ENCODE measurements at regions of chr2 and their contacts with region 1.

Region 1: DNA sequence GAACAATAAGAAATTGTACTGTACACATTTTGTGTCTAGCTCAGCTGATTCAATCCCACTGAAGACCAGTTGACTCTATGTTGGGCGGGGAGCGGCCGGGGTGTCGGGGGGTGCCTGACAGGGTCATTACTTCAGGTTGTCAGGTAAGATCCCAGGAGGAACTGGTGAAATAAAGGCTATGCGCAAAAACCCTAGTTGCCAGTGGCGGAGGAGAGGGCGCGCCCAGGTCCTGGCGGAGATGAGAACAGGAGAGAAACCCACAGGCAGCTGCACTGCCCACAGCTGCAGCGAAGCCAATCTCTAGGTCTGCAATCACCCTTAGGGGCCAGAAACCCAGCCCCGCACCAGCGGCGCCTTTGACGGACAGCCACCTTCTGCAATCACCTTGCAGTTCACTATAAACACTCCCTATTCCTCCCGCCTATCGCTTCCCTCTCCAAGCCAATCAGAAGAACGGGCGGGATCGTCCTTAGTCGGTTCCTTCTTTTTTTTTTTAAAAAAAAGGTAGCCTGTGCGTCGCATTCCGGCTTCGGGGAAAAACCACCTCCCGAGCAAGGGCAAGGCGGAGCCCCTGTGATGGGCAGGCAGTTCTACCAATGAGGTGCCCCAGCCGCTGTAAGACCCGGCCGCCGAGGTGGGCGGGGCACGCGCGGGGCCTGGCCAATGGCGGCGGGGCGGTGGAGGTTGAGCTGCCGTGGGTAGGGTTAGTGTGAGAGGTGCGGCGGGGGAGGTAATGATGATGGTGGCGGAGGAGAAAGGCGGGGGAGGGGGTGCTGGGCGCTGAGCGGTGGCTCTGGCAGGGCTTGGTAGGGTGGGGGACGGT is at the start of gene EHBP1:
- DNase-seq: peak; percentile 95 to 99 (median 98)
- ATAC-seq: peak; percentile 98
- H3K4me3 ChIP-seq: peak within 1 kb of the TSS; percentile 82
- H3K4me3 Mint-ChIP-seq: peak within 1 kb of the TSS; percentile 83 to 98 (median 92)
- H3K27ac ChIP-seq: peak within 1 kb of the TSS; percentile 72
- H3K27ac Mint-ChIP-seq: peak within 1 kb of the TSS; percentile 76 to 93 (median 84)
- H3K4me1 ChIP-seq: peaks cover 0 to 25% of the 10 kb centered on the region in 2 donors
- H3K4me1 Mint-ChIP-seq: peaks cover 24 to 48% (median 31%) of the 10 kb centered on the region in 7 donors
- H3K27me3 ChIP-seq: no peaks in the 10 kb centered on the region
- H3K27me3 Mint-ChIP-seq: peaks cover 0 to 13% (median 0%) of the 10 kb centered on the region in 5 donors
- total RNA-seq, gene EHBP1: 23.8 to 31.5 (median 30.0) TPM

Region 2: DNA sequence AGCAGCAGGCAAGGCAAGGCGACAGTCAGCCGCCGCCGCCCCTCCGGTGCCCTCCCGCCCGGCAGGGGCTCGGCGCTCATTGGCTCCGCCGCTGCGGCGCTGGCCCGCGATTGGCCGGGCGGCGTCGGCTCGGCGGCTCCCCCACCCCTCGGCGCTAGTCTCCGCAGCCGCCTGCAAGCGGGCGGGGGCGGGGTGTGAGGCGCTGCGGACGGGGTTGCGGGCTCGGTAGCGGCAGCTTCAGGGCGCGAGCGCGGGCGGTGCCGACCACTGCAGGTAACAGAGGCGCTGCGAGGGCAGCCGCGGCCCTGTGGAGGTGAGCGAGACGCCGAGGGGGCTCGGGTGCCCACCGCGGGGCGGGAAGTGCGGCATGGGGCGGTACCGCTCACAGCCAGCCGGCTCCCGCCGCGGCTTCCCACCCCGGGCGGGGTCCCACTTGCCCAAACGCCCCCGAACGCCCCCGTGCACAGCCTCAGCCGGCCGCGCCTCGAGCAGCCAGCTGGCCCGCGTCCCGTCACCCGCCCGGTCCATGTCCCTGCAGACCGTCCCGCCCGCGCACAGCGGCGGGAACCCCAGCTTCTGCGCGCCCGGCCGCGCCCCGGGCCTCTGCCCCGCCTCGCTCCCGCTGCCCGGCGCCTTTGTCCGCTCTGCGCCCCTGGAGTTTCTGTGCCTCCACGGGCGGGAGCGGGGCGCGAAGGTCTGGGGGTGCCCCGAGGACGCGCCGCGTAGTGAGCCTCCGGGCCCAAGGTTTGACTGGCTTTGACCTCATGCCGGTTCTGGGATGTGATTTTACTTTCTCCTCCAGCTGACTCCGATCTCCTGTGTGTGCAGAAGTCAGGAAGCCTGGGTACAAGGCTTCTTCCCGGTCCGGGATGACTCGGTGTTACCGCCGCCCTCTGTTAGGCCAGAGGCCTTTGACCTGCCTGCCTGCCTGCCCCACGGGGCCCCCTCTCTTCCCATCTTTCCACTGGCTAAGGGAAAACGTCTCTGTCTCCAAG is 1639.2 kb before region 1 on chr2 and contains the start of gene SANBR:
- CTCF ChIA-PET with region 1: no interaction called
- POLR2A ChIA-PET with region 1: no interaction called
- intact Hi-C with region 1: loop called in 1 of 2 experiments (anchors 5 kb)
- DNase-seq: peak; percentile 78 to 90 (median 83)
- ATAC-seq: peak; percentile 99
- H3K4me3 ChIP-seq: peak within 1 kb of the TSS; percentile 59
- H3K4me3 Mint-ChIP-seq: peak within 1 kb of the TSS; percentile 79 to 98 (median 95)
- H3K27ac ChIP-seq: peak within 1 kb of the TSS; percentile 49
- H3K27ac Mint-ChIP-seq: peak within 1 kb of the TSS; percentile 12 to 94 (median 79)
- H3K4me1 ChIP-seq: peaks cover 0 to 6% of the 10 kb centered on the region in 2 donors
- H3K4me1 Mint-ChIP-seq: peaks cover 0 to 17% (median 5%) of the 10 kb centered on the region in 7 donors
- H3K27me3 ChIP-seq: no peaks in the 10 kb centered on the region
- H3K27me3 Mint-ChIP-seq: peaks cover 0 to 2% (median 0%) of the 10 kb centered on the region in 5 donors
- total RNA-seq, gene SANBR: 2.0 to 5.9 (median 3.6) TPM

Region 3: DNA sequence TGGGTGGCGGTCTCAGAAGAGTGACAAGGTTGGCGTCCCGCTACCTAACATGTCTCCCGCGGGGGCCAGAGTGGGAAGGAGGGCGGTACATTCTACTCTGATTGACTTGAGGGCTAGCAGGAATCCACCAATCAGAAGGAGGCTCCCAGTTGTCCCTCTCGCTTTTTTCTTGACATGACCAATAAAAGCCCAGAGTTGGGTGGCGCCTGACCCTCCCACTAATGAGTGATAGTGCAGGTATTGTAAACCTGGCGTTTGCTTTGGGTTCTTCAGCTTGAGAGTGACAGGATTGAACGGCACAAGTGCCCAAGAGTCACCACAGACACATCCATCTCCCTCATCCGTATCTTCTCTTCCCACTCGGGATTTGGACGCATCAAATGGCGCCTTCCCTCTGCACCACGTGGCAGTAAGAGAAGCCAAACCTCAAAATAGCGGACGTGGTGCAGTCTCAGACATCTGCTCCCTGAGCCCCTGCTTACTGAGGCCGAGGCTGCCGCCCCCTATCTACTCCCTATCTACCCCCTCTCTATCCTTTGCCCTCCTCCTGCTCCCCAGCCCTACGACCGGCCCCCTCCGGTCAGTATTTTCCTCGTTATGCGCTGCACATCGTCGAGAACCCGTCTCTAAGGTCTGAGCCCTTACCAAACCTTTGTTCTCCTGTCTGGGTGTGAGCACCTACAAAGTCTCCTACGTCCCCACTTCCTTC is 850.6 kb before region 1 on chr2:
- CTCF ChIA-PET with region 1: no interaction called
- POLR2A ChIA-PET with region 1: no interaction called
- intact Hi-C with region 1: loop called in 1 of 2 experiments (anchors 1 kb)
- DNase-seq: peak; percentile 61 to 96 (median 94)
- ATAC-seq: peak; percentile 95
- H3K4me3 ChIP-seq: peak overlapping the region; percentile 100
- H3K4me3 Mint-ChIP-seq: peak overlapping the region; percentile 92 to 99 (median 96)
- H3K27ac ChIP-seq: peak overlapping the region; percentile 77
- H3K27ac Mint-ChIP-seq: peak overlapping the region; percentile 90 to 98 (median 95)
- H3K4me1 ChIP-seq: peaks cover 4 to 6% of the 10 kb centered on the region in 2 donors
- H3K4me1 Mint-ChIP-seq: peaks cover 10 to 27% (median 17%) of the 10 kb centered on the region in 7 donors
- H3K27me3 ChIP-seq: no peaks in the 10 kb centered on the region
- H3K27me3 Mint-ChIP-seq: no peaks in the 10 kb centered on the region

Region 4: GRCh38 chr2:62505750-62506420 is 199.3 kb before region 1 on chr2 and contains the start of gene TMEM17:
- CTCF ChIA-PET with region 1: no interaction called
- POLR2A ChIA-PET with region 1: no interaction called
- intact Hi-C with region 1: loop called in 1 of 2 experiments (anchors 1 kb)
- DNase-seq: peak in 3 of 9 donors; percentile 1 to 47 (median 17)
- ATAC-seq: peak; percentile 77
- H3K4me3 ChIP-seq: peak within 1 kb of the TSS; percentile 44
- H3K4me3 Mint-ChIP-seq: peak within 1 kb of the TSS; percentile 61 to 83 (median 74)
- H3K27ac ChIP-seq: no peak within 1 kb of the TSS
- H3K27ac Mint-ChIP-seq: no peak within 1 kb of the TSS
- H3K4me1 ChIP-seq: no peaks in the 10 kb centered on the region
- H3K4me1 Mint-ChIP-seq: peaks cover 6 to 12% (median 10%) of the 10 kb centered on the region in 7 donors
- H3K27me3 ChIP-seq: no peaks in the 10 kb centered on the region
- H3K27me3 Mint-ChIP-seq: peaks cover 23 to 40% (median 29%) of the 10 kb centered on the region in 5 donors
- total RNA-seq, gene TMEM17: 0.15 TPM in 1 of 5 experiments, not detected in the others

Region 5: GRCh38 chr2:62604336-62604735 is 100.9 kb before region 1 on chr2:
- CTCF ChIA-PET with region 1: no interaction called
- POLR2A ChIA-PET with region 1: no interaction called
- intact Hi-C with region 1: no loop called
- DNase-seq: no peak
- ATAC-seq: no peak
- H3K4me3 ChIP-seq: no peak overlapping the region
- H3K4me3 Mint-ChIP-seq: no peak overlapping the region
- H3K27ac ChIP-seq: no peak overlapping the region
- H3K27ac Mint-ChIP-seq: no peak overlapping the region
- H3K4me1 ChIP-seq: no peaks in the 10 kb centered on the region
- H3K4me1 Mint-ChIP-seq: no peaks in the 10 kb centered on the region
- H3K27me3 ChIP-seq: no peaks in the 10 kb centered on the region
- H3K27me3 Mint-ChIP-seq: peaks cover 0 to 47% (median 35%) of the 10 kb centered on the region in 5 donors

Region 6: DNA sequence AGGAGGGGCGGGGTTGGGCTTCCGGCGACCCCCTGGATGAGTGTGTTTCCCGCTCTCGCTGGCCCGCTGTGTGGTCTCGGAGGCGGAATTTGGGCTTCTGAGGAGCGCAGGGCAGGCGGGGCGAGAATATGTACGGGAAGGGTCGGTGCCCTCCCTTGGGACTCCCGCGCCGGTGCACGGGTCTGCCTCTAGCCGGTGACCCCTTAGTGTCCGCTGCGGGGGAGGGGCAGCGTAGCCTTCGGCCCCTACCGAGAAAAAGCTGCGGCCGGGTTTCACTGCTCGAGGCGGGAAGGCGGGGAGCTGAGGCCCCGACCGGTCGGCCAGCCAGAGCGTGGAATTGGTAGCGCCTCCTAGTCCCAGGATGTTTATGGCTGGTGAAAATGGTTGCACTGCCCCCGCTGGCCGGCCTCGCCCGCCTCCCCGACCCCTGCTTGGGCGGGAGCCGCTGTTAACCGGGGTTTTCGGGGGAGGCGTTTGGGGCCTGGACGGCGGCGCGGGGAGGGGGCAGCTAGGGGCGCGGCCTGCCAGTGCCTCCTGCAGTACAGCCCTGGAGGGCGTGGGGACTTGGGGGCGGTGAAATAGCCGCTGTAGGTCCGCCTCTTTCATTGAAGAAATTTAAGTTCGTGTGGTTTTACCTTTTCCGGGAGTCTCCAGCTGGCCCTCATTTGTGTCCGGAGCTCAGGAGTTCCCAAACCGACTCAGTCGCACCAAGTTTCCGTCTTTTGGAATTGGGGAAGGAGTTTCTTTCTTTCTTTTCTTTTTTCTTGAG is 1136.2 kb after region 1 on chr2 and contains the start of gene UGP2:
- CTCF ChIA-PET with region 1: no interaction called
- POLR2A ChIA-PET with region 1: no interaction called
- intact Hi-C with region 1: loop called (anchors 1 kb)
- DNase-seq: peak; percentile 68 to 89 (median 83)
- ATAC-seq: peak; percentile 77
- H3K4me3 ChIP-seq: peak within 1 kb of the TSS; percentile 82
- H3K4me3 Mint-ChIP-seq: peak within 1 kb of the TSS; percentile 97 to 100 (median 99)
- H3K27ac ChIP-seq: peak within 1 kb of the TSS; percentile 90
- H3K27ac Mint-ChIP-seq: peak within 1 kb of the TSS; percentile 95 to 99 (median 97)
- H3K4me1 ChIP-seq: peaks cover 5 to 24% of the 10 kb centered on the region in 2 donors
- H3K4me1 Mint-ChIP-seq: peaks cover 27 to 60% (median 53%) of the 10 kb centered on the region in 7 donors
- H3K27me3 ChIP-seq: no peaks in the 10 kb centered on the region
- H3K27me3 Mint-ChIP-seq: peaks cover 0 to 14% (median 0%) of the 10 kb centered on the region in 5 donors
- total RNA-seq, gene UGP2: 69.5 to 134 (median 92.4) TPM

Measured in naive thymus-derived CD4-positive, alpha-beta T cell (primary cell).